ENCODE measurements at regions of chr20 and their contacts with region 1.

Region 1: GRCh38 chr20:57351042-57351783 is at the start of gene RAE1:
- DNase-seq: peak; percentile 86 to 94 (median 91)
- H3K4me3 ChIP-seq: peak within 1 kb of the TSS; percentile 62 to 100 (median 97)
- H3K27ac ChIP-seq: peak within 1 kb of the TSS in 57 of 59 donors; percentile 53 to 93 (median 85)
- H3K27me3 ChIP-seq: peaks cover 0 to 8% (median 0%) of the 10 kb centered on the region in 45 donors
- CTCF ChIP-seq: peak in 13 of 56 donors; percentile 4 to 45 (median 19)
- total RNA-seq, gene RAE1: 16.2 to 42.7 (median 30.2) TPM

Region 2: GRCh38 chr20:56468316-56469082 is 882.7 kb before region 1 on chr20 and contains the start of gene RTF2:
- intact Hi-C with region 1: loop called in 1 of 2 experiments (anchors 10 kb)
- DNase-seq: peak; percentile 89 to 99 (median 93)
- H3K4me3 ChIP-seq: peak within 1 kb of the TSS; percentile 43 to 99 (median 87)
- H3K27ac ChIP-seq: peak within 1 kb of the TSS in 57 of 59 donors; percentile 35 to 91 (median 80)
- H3K27me3 ChIP-seq: no peaks in the 10 kb centered on the region
- CTCF ChIP-seq: peak in 29 of 56 donors; percentile 7 to 55 (median 25)
- total RNA-seq, gene RTF2: 74.7 to 133 (median 99.7) TPM

Region 3: DNA sequence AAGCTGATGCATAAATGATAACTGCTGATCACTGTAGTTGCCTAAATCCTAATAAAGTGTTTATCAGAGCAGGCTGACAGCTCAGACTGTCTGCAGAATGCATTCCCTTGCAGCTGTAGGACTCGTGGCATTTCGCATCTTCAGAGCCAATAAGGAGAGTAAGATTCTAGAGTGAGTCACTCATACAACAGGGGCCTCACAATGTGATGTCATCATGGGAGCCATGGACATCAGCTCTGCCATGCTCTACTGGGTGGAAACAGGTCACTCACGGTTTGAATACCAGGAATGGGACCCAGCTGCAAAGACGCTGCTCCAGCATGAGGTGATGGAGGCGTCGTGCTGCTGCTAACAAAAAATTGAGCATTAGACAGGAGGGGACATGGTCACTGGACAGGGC is 810.8 kb before region 1 on chr20:
- intact Hi-C with region 1: loop called in 1 of 2 experiments (anchors 10 kb)
- DNase-seq: no peak
- H3K4me3 ChIP-seq: no peak overlapping the region
- H3K27ac ChIP-seq: no peak overlapping the region
- H3K27me3 ChIP-seq: no peaks in the 10 kb centered on the region
- CTCF ChIP-seq: no peak

Region 4: GRCh38 chr20:56554869-56555268 is 796.3 kb before region 1 on chr20:
- intact Hi-C with region 1: loop called in 1 of 2 experiments (anchors 5 kb)
- DNase-seq: peak in 5 of 10 donors; percentile 14 to 54 (median 33)
- H3K4me3 ChIP-seq: no peak overlapping the region
- H3K27ac ChIP-seq: peak overlapping the region in 1 of 59 donors; percentile 26
- H3K27me3 ChIP-seq: peaks cover 0 to 14% (median 0%) of the 10 kb centered on the region in 45 donors
- CTCF ChIP-seq: peak in 2 of 56 donors; percentile 11 to 17

Measured in dorsolateral prefrontal cortex (tissue), 120 donors.